ENCODE measurements at regions of chr7 and their contacts with region 1.

Region 1: GRCh38 chr7:28096713-28097112 is 83.9 kb downstream of the JAZF1 start:
- DNase-seq: peak in 1 of 2 experiments; percentile 66
- H3K4me3 ChIP-seq: no peak overlapping the region
- H3K4me3 Mint-ChIP-seq: no peak overlapping the region
- H3K27ac Mint-ChIP-seq: no peak overlapping the region
- H3K4me1 ChIP-seq: no peaks in the 10 kb centered on the region
- H3K4me1 Mint-ChIP-seq: no peaks in the 10 kb centered on the region
- H3K27me3 ChIP-seq: no peaks in the 10 kb centered on the region
- H3K27me3 Mint-ChIP-seq: peaks cover 3% of the 10 kb centered on the region
- CTCF ChIP-seq: peak; percentile 80 to 84

Region 2: GRCh38 chr7:28002638-28003037 is 94.1 kb before region 1 on chr7:
- CTCF ChIA-PET with region 1: no interaction called
- POLR2A ChIA-PET with region 1: no interaction called
- intact Hi-C with region 1: no loop called
- DNase-seq: no peak
- H3K4me3 ChIP-seq: no peak overlapping the region
- H3K4me3 Mint-ChIP-seq: no peak overlapping the region
- H3K27ac Mint-ChIP-seq: no peak overlapping the region
- H3K4me1 ChIP-seq: no peaks in the 10 kb centered on the region
- H3K4me1 Mint-ChIP-seq: no peaks in the 10 kb centered on the region
- H3K27me3 ChIP-seq: no peaks in the 10 kb centered on the region
- H3K27me3 Mint-ChIP-seq: peaks cover 4% of the 10 kb centered on the region
- CTCF ChIP-seq: no peak

Region 3: GRCh38 chr7:28020302-28020940 is 76.3 kb before region 1 on chr7:
- CTCF ChIA-PET with region 1: interaction called, 3 read pairs
- POLR2A ChIA-PET with region 1: no interaction called
- intact Hi-C with region 1: loop called (anchors 10 kb)
- DNase-seq: peak; percentile 76 to 77
- H3K4me3 ChIP-seq: no peak overlapping the region
- H3K4me3 Mint-ChIP-seq: peak overlapping the region; percentile 43
- H3K27ac Mint-ChIP-seq: no peak overlapping the region
- H3K4me1 ChIP-seq: peaks cover 3% of the 10 kb centered on the region; the same call in 1 of the 2 replicates
- H3K4me1 Mint-ChIP-seq: no peaks in the 10 kb centered on the region
- H3K27me3 ChIP-seq: no peaks in the 10 kb centered on the region; the same call in 1 of the 2 replicates
- H3K27me3 Mint-ChIP-seq: no peaks in the 10 kb centered on the region
- CTCF ChIP-seq: peak; percentile 87 to 88

Region 4: GRCh38 chr7:28062197-28062991 is 34.3 kb before region 1 on chr7:
- CTCF ChIA-PET with region 1: interaction called, 71 read pairs
- POLR2A ChIA-PET with region 1: no interaction called
- intact Hi-C with region 1: loop called (anchors 1 kb)
- DNase-seq: peak; percentile 69 to 76
- H3K4me3 ChIP-seq: no peak overlapping the region
- H3K4me3 Mint-ChIP-seq: no peak overlapping the region
- H3K27ac Mint-ChIP-seq: no peak overlapping the region
- H3K4me1 ChIP-seq: no peaks in the 10 kb centered on the region
- H3K4me1 Mint-ChIP-seq: peaks cover 7% of the 10 kb centered on the region
- H3K27me3 ChIP-seq: no peaks in the 10 kb centered on the region
- H3K27me3 Mint-ChIP-seq: peaks cover 8% of the 10 kb centered on the region
- CTCF ChIP-seq: peak; percentile 76 to 86

Region 5: GRCh38 chr7:28078036-28078901 is 18.4 kb before region 1 on chr7:
- CTCF ChIA-PET with region 1: interaction called, 13 read pairs
- POLR2A ChIA-PET with region 1: no interaction called
- intact Hi-C with region 1: no loop called
- DNase-seq: peak in 1 of 2 experiments; percentile 66
- H3K4me3 ChIP-seq: no peak overlapping the region
- H3K4me3 Mint-ChIP-seq: no peak overlapping the region
- H3K27ac Mint-ChIP-seq: no peak overlapping the region
- H3K4me1 ChIP-seq: no peaks in the 10 kb centered on the region
- H3K4me1 Mint-ChIP-seq: no peaks in the 10 kb centered on the region
- H3K27me3 ChIP-seq: no peaks in the 10 kb centered on the region
- H3K27me3 Mint-ChIP-seq: peaks cover 20% of the 10 kb centered on the region
- CTCF ChIP-seq: peak; percentile 90 to 95